ENCODE measurements at regions of chr10 and their contacts with region 1.

Region 1: GRCh38 chr10:114550756-114551635 is 107.1 kb downstream of the ABLIM1 start:
- DNase-seq: peak; percentile 73
- H3K4me3 ChIP-seq: no peak overlapping the region
- H3K27ac ChIP-seq: no peak overlapping the region
- H3K4me1 ChIP-seq: no peaks in the 10 kb centered on the region
- H3K27me3 ChIP-seq: peaks cover 14% of the 10 kb centered on the region

Region 2: DNA sequence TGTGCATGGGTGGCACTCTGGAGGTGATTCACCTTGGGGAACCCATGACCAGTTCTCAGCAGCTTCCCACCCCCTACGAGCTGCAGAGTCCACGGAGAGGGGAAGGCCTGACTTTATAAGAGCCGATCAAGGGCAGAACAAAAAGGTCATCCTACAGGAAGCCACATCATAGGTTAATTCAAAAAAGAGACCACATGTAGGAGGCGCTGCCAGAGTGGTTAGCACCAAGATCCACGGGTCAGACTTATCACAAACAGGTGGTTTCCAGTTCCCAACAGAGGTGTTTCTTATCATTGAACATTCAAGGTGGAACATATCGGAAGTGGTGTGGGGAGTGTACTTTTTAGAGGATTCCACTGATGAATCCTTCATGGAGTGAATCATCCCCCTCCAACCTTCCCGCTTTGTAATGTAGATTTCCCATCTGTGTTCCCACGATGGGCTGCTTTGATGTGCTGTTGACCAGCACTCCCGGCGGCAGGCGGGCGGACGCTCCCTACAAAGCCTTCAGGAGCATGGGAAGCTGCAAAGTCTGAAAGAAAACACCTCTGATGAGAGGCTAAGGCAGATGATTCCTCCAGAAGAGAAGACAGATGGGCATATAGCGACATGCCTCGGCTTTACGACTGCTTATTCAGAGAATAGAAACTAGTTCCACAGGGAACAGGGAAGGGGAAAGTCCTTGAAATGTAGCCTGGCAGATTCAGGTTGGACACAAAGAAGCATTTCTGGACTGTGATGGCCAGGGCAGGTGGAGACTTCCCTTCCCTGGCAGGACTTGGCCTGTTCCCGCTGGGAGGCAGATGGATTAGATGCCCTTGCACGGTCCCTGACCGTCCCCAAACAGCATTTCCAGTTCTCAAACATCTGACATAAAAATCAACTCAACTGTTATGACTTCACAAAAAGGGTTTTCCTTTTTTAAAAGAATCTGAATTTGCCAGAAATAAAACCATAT is 213.2 kb before region 1 on chr10:
- in situ Hi-C with region 1: no loop called
- DNase-seq: no peak
- H3K4me3 ChIP-seq: no peak overlapping the region
- H3K27ac ChIP-seq: no peak overlapping the region
- H3K4me1 ChIP-seq: no peaks in the 10 kb centered on the region
- H3K27me3 ChIP-seq: peaks cover 14% of the 10 kb centered on the region; the same call in 1 of the 2 replicates

Region 3: GRCh38 chr10:114388275-114388674 is 162.7 kb before region 1 on chr10:
- in situ Hi-C with region 1: no loop called
- DNase-seq: no peak
- H3K4me3 ChIP-seq: no peak overlapping the region
- H3K27ac ChIP-seq: no peak overlapping the region
- H3K4me1 ChIP-seq: no peaks in the 10 kb centered on the region
- H3K27me3 ChIP-seq: no peaks in the 10 kb centered on the region

Region 4: DNA sequence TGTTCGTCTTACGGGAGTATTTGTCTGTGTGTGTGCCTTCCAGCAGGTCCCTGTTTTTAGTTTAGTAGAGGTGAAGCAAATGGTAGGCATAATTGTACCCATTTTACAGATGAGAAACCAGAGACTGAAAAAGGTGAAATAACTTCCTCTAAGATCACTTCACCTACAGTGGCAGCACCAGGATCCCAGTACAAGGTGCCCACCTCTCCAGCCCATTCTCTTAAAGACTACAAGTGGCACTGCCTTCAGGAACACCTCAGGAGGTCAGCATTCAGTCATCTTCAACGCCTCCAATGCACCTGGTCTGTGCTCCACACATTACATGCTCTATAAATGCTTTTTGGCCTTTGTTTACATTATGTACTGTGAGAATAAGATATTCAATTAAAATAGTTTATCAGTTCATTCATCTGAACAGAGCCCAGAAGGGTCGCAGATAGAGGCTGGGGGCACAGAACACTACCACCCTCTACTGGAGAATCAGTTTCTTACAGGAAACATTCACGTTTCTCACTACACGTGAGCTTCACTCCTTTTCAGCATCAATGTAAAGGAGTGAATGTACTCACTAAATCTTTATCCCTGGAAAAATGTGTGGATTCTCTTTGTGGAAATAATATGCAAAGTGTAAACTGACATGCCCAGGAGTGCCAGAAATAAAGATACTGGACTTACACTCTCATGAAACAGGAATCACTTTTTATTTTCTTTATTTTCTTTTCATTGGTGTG is 152.5 kb after region 1 on chr10:
- in situ Hi-C with region 1: loop called (anchors 10 kb)
- DNase-seq: peak; percentile 41
- H3K4me3 ChIP-seq: no peak overlapping the region
- H3K27ac ChIP-seq: no peak overlapping the region
- H3K4me1 ChIP-seq: peaks cover under 1% of the 10 kb centered on the region
- H3K27me3 ChIP-seq: peaks cover 17% of the 10 kb centered on the region; the same call in 1 of the 2 replicates

Region 5: GRCh38 chr10:114779803-114780609 is 229.0 kb after region 1 on chr10:
- in situ Hi-C with region 1: loop called (anchors 10 kb)
- DNase-seq: peak; percentile 72
- H3K4me3 ChIP-seq: no peak overlapping the region
- H3K27ac ChIP-seq: 0 out of 2 replicates have a peak overlapping the region, but pooled peaks have one; percentile 31
- H3K4me1 ChIP-seq: peaks cover 17% of the 10 kb centered on the region
- H3K27me3 ChIP-seq: no peaks in the 10 kb centered on the region

Measured in GM23248 (cell line).